ENCODE measurements at regions of chr10 and their contacts with region 1.

Region 1: GRCh38 chr10:116597543-116597942 is 6.8 kb downstream of the PNLIPRP1 start:
- DNase-seq: no peak
- ATAC-seq: no peak

Region 2: GRCh38 chr10:116457488-116457887 is 140.1 kb before region 1 on chr10:
- intact Hi-C with region 1: no loop called
- DNase-seq: no peak
- ATAC-seq: no peak

Region 3: DNA sequence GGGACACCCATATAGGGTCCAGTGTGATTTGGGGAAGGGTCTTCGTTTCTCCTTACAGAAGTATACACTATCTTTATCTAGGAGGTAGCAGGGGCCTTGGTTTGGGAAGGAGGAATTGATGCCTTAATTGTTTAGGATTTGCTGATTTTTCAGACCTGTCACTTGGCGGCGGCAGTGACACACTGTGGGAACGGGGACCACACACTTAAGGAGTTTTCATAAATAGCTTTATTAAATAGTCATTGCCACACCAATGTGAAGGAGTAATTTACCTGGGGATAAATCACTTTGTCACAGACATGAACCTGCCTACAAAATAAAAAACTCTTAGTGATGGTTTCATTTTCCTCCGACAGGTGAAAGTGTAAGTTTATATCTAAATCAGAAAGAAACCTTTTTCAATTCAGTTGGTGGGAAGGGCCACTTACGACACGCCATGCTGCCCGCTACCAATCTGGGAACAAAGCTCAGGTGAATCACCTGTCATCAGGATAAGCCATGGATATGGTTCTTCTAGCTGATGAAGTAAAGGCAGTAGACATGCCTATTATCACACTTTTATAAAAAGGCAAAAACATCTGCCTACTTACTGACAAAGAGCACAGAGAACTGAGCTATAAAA is 239.5 kb after region 1 on chr10:
- intact Hi-C with region 1: no loop called
- DNase-seq: no peak
- ATAC-seq: no peak

Region 4: GRCh38 chr10:117472872-117473271 is 875.3 kb after region 1 on chr10:
- intact Hi-C with region 1: loop called (anchors 5 kb)
- DNase-seq: no peak
- ATAC-seq: no peak